Gastrocnemius medialis (tissue), 4 donors: ENCODE measurements at regions of chr14 and their contacts with region 1.

Region 1: DNA sequence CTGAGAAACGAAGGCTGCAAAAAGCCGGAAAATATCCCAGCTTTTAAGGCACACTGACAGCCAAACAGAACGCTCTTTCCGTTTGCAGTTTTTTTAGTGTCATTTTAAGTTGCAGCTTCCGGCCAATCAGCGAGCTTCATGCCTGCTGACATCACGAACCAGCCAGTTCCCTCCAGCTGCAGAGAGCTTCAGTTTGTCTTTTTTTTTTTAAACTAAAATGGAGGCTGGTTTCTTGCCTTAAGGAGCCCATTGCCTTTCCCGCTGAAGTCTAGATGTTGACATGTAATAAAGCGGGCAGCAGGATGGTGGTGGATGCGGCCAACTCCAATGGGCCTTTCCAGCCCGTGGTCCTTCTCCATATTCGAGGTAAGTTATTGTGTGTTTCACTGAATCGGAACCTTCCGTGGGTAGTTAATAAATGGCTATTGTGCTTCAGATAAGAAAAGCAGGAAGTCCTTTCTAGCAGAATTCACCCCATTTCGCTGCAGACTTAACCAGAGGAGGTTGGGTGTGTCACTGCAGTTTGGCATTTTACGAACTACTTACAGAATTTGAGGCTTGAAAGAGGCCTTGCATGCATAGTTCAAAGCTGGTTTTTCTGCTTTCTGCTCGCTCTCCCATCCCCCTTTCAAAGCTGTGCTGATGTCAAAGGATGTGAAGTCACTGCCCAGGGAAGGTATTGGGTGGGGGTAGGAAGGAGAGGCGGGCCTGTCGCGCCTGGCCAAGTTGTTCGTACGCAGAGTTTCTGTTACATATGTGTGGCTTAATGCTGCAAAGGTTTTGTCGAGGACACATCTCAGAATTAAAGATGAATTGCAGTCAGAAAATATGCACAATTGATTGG is 48.4 kb downstream of the PPP2R5C start:
- DNase-seq: peak; percentile 79 to 87
- ATAC-seq: peak; percentile 91 to 93
- H3K4me3 ChIP-seq: peak overlapping the region; percentile 67 to 82 (median 72)
- H3K27ac ChIP-seq: peak overlapping the region; percentile 91 to 96 (median 93)
- H3K4me1 ChIP-seq: peaks cover 43 to 50% of the 10 kb centered on the region in 2 donors
- H3K27me3 ChIP-seq: no peaks in the 10 kb centered on the region
- CTCF ChIP-seq: no peak
- POLR2A ChIP-seq: peak; percentile 44 to 74

Region 2: DNA sequence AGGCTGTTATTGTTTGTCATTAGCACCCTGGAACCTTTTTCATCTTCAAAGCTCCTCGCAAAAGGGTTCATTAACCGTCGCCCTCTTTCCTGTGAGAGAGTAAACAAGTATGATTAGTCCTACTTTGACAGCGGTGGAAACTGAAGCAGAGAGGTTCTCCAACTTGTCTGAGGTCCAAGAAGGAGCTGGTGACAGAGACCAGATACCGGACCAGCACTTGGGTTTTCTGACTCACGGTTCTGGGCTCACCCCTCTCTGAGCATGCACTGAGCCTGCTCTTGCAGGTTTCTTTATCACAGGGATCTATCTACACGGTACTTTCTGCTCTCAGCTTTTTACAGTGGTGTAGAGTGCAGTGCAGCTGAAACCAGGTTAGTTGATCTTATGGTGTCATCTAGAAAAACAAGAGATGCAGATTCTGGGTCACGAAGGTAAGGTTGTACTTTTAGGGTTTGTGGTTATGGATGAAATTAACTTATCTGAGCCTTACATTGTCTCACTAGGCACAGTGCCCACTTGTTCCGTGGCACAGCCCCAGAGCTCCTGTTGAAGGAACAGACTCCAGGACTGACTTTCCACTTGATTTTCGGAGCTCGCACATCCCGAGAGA is 13.7 kb after region 1 on chr14:
- in situ Hi-C with region 1: no loop called
- intact Hi-C with region 1: loop called (anchors 2 kb)
- DNase-seq: peak; percentile 37 to 46
- ATAC-seq: peak; percentile 57 to 86
- H3K4me3 ChIP-seq: peak overlapping the region; percentile 8 to 35 (median 27)
- H3K27ac ChIP-seq: peak overlapping the region; percentile 75 to 88 (median 84)
- H3K4me1 ChIP-seq: peaks cover 52 to 56% of the 10 kb centered on the region in 2 donors
- H3K27me3 ChIP-seq: no peaks in the 10 kb centered on the region
- CTCF ChIP-seq: no peak
- POLR2A ChIP-seq: no peak

Region 3: GRCh38 chr14:101927859-101928258 is 118.0 kb after region 1 on chr14:
- in situ Hi-C with region 1: no loop called
- intact Hi-C with region 1: loop called (anchors 5 kb)
- DNase-seq: peak; percentile 85 to 93
- ATAC-seq: peak; percentile 94
- H3K4me3 ChIP-seq: peak overlapping the region in 3 of 4 donors; percentile 20 to 38 (median 23)
- H3K27ac ChIP-seq: peak overlapping the region; percentile 77 to 84 (median 83)
- H3K4me1 ChIP-seq: peaks cover 22 to 27% of the 10 kb centered on the region in 2 donors
- H3K27me3 ChIP-seq: no peaks in the 10 kb centered on the region
- CTCF ChIP-seq: no peak
- POLR2A ChIP-seq: peak in 1 of 2 donors; percentile 29

Region 4: DNA sequence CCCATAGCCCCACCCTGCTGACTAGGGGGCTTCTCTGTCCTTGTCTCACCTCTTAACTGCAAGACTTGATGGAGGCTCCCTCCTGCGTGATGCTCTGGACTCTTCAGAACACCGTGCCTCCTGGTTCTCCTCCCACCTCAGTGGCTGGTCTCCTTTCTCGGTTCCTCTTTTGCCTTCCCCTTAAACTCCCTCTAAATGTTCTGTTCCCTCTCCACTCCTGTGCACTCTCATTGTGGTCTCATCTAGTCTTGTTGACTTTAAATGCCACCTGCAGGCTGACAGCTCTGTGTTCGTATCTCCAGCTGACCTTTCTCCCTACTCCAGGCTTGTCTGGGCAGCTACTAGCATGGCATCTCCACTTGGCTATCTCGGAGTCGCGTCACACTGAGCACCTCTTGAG is 182.8 kb after region 1 on chr14:
- in situ Hi-C with region 1: no loop called
- intact Hi-C with region 1: no loop called
- DNase-seq: no peak
- ATAC-seq: no peak
- H3K4me3 ChIP-seq: no peak overlapping the region
- H3K27ac ChIP-seq: no peak overlapping the region
- H3K4me1 ChIP-seq: no peaks in the 10 kb centered on the region
- H3K27me3 ChIP-seq: no peaks in the 10 kb centered on the region
- CTCF ChIP-seq: no peak
- POLR2A ChIP-seq: no peak